ENCODE measurements at regions of chr3 and their contacts with region 1.

Region 1: DNA sequence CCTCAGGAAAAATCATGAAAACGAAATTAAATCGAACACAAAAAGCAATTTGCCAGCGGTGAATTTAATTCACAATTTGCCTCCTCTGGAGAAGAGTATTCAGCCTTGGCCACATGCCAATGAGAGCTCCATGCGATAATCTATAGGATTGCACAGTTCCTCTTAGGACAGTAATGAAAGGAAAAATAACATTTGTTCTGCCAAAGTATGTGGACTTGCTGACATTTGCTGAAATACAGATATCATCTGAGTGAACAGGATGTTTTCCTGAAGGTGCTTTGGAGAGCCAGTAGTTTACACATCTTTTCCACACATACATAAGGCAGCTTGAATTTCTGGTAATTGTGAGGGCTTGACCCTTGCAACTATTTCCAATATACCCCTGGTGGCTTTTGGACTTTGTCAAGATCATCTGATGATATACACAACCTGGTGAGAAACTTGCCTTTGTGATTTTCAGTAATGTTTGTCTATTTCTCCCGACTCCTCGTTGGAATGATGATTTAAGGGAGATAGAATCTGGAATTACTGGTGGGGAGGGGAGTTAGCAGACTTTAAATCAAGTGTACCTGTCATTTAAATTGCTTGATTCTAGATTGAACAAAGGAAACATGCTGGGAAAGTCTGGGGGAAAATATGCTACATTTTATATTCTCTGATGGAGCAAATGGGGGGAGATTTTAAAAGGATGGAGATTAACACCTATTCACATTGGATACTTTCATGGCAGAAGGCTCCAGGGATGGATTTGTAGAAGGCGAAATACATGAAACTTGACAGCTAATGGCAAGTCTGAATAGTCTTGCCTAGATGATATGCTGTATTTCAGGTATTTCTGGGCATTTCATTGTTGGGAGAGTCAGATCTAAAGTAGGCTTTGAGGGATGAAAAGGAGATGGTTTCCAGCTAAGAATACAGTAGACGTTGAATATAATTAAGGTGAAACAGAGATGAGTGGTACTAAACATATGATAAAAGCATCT is 188.9 kb upstream of the PDZRN3 start:
- DNase-seq: no peak
- H3K4me3 ChIP-seq: no peak overlapping the region
- H3K4me3 Mint-ChIP-seq: no peak overlapping the region
- H3K27ac Mint-ChIP-seq: no peak overlapping the region
- H3K4me1 ChIP-seq: no peaks in the 10 kb centered on the region
- H3K4me1 Mint-ChIP-seq: no peaks in the 10 kb centered on the region
- H3K27me3 ChIP-seq: no peaks in the 10 kb centered on the region
- H3K27me3 Mint-ChIP-seq: no peaks in the 10 kb centered on the region
- CTCF ChIP-seq: no peak

Region 2: DNA sequence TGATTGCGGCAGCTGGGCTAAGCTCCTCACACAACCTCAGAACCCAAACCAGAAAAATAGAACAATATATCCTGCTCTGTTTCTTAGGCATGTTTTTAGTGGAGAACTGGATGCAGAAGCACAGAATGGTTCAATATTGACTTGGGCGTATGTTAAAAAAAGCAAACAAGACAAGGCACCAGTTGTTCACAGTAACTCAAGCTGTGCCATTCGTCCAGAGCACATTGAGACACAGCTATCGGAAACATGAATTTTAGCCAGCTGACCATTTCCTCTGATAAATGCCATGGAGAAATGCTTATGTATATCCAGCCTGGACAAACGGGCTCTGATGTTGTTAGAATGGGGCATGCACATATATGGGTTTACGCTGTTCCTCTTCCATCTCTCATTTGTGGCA is 59.6 kb before region 1 on chr3:
- CTCF ChIA-PET with region 1: no interaction called
- POLR2A ChIA-PET with region 1: no interaction called
- intact Hi-C with region 1: no loop called
- DNase-seq: no peak
- H3K4me3 ChIP-seq: no peak overlapping the region
- H3K4me3 Mint-ChIP-seq: no peak overlapping the region
- H3K27ac Mint-ChIP-seq: no peak overlapping the region
- H3K4me1 ChIP-seq: no peaks in the 10 kb centered on the region
- H3K4me1 Mint-ChIP-seq: no peaks in the 10 kb centered on the region
- H3K27me3 ChIP-seq: no peaks in the 10 kb centered on the region
- H3K27me3 Mint-ChIP-seq: no peaks in the 10 kb centered on the region
- CTCF ChIP-seq: no peak

Region 3: DNA sequence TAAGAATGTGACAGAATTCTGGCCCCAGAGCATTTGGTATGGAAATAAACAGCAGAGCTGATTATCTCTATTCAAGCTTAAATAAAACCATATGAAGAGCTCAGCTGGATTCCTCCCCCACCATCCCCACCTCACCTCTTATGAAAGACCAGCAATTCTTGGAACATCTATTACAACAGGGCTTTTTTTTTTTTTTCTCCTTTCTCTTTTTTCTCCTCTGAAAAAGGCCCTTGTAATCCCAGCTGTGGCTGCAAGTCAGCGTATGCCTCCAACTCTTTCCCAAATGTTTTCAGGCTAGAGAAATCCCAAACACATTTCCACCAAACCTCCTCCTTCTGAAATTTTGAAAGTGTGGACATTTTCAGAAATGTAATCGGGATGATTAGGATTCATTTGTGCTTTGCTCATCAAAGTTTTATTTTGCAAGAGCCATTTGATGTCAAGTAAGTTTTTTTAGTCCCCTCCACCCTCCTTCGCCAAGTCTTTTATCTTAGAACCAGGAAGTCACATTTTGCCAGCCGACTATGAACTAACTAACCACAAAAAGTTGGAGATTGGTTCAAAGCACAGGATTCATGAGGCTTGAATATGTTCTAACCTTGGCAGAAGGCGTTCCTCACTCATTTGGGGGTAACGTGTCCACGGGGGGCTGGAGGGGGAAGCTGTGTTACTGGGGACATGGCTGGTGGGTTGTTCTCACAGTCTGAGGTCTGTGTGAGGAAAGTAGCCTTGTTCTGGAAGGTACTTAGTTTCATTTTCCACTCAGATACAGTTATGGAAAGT is 46.8 kb before region 1 on chr3:
- CTCF ChIA-PET with region 1: no interaction called
- POLR2A ChIA-PET with region 1: no interaction called
- intact Hi-C with region 1: loop called (anchors 1 kb)
- DNase-seq: no peak
- H3K4me3 ChIP-seq: no peak overlapping the region
- H3K4me3 Mint-ChIP-seq: no peak overlapping the region
- H3K27ac Mint-ChIP-seq: no peak overlapping the region
- H3K4me1 ChIP-seq: no peaks in the 10 kb centered on the region
- H3K4me1 Mint-ChIP-seq: peaks cover 6% of the 10 kb centered on the region
- H3K27me3 ChIP-seq: no peaks in the 10 kb centered on the region
- H3K27me3 Mint-ChIP-seq: peaks cover 4% of the 10 kb centered on the region
- CTCF ChIP-seq: no peak

Region 4: GRCh38 chr3:73781541-73781940 is 32.1 kb before region 1 on chr3:
- CTCF ChIA-PET with region 1: no interaction called
- POLR2A ChIA-PET with region 1: no interaction called
- intact Hi-C with region 1: no loop called
- DNase-seq: no peak
- H3K4me3 ChIP-seq: no peak overlapping the region
- H3K4me3 Mint-ChIP-seq: no peak overlapping the region
- H3K27ac Mint-ChIP-seq: no peak overlapping the region
- H3K4me1 ChIP-seq: peaks cover 5% of the 10 kb centered on the region; the same call in 1 of the 2 replicates
- H3K4me1 Mint-ChIP-seq: no peaks in the 10 kb centered on the region
- H3K27me3 ChIP-seq: no peaks in the 10 kb centered on the region
- H3K27me3 Mint-ChIP-seq: no peaks in the 10 kb centered on the region
- CTCF ChIP-seq: no peak

Measured in Caco-2 (cell line).